ENCODE measurements at regions of chr1 and their contacts with region 1.

Region 1: GRCh38 chr1:119808972-119809550 is 2.2 kb downstream of the REG4 start:
- DNase-seq: peak; percentile 47 to 78
- H3K4me3 ChIP-seq: no peak overlapping the region
- H3K27ac ChIP-seq: no peak overlapping the region
- H3K4me1 ChIP-seq: no peaks in the 10 kb centered on the region
- H3K27me3 ChIP-seq: peaks cover 0 to 1% (median 0%) of the 10 kb centered on the region in 4 experiments; a peak in 3 of 7 replicates
- CTCF ChIP-seq: peak; percentile 79 to 91 (median 87)
- EP300 ChIP-seq: no peak
- POLR2A ChIP-seq: no peak
- RAD21 ChIP-seq: peak; percentile 71 to 78

Region 2: GRCh38 chr1:119795261-119796200 is 13.5 kb before region 1 on chr1:
- CTCF ChIA-PET with region 1: interaction called, 76 read pairs
- POLR2A ChIA-PET with region 1: no interaction called
- DNase-seq: peak in 1 of 2 experiments; percentile 36
- H3K4me3 ChIP-seq: no peak overlapping the region
- H3K27ac ChIP-seq: no peak overlapping the region
- H3K4me1 ChIP-seq: peaks cover 0 to 3% (median 0%) of the 10 kb centered on the region in 4 experiments; a peak in 1 of 7 replicates
- H3K27me3 ChIP-seq: no peaks in the 10 kb centered on the region; a peak in 1 of 7 replicates
- CTCF ChIP-seq: no peak
- EP300 ChIP-seq: no peak
- POLR2A ChIP-seq: no peak
- RAD21 ChIP-seq: no peak